ENCODE measurements at regions of chr16 and their contacts with region 1.

Region 1: DNA sequence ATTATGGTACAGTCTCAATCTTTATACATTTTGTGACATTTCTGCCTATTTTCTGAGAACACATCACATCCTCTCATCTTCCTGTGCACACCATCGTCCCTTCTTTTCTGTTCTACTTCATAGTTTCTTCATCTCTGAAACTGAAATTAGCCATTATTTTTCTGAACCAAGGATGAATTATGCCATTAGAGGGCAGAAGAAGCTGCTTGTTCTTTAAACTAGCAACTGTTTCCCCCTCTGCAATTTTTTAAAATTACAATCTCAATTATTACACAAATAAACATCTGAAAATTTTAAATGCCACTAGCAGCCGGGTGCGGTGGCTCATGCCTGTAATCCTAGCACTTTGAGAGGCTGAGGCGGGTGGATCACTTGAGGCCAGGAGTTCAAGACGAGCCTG is 41.3 kb downstream of the RBBP6 start:
- DNase-seq: no peak
- H3K4me3 ChIP-seq: peak overlapping the region in 1 of 59 donors; percentile 3
- H3K27ac ChIP-seq: no peak overlapping the region
- H3K27me3 ChIP-seq: no peaks in the 10 kb centered on the region
- CTCF ChIP-seq: peak in 53 of 56 donors; percentile 15 to 65 (median 40)

Region 2: DNA sequence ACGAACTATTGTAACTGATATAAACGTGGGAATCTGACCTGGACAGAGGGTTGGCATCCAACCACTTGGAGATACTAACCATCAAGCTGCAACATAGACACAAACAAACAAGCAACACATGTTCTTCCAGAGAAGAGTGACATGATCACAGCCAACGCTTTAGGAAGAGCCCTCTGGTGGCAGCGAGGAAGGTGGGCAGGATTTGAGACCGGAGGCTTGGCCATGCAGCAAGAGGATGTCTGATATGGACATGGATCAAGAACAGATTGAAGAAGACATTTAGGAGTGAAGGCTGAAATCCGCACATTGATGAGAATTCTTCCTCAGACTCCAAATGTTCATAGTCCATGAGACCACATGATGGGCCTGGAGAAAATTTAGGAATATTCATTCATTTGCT is 108.5 kb after region 1 on chr16:
- intact Hi-C with region 1: loop called in 1 of 2 experiments (anchors 10 kb)
- DNase-seq: peak in 2 of 10 donors; percentile 22 to 68
- H3K4me3 ChIP-seq: no peak overlapping the region
- H3K27ac ChIP-seq: peak overlapping the region in 7 of 59 donors; percentile 0 to 59 (median 12)
- H3K27me3 ChIP-seq: no peaks in the 10 kb centered on the region
- CTCF ChIP-seq: peak in 53 of 56 donors; percentile 21 to 69 (median 53)

Region 3: GRCh38 chr16:24717411-24717810 is 136.7 kb after region 1 on chr16:
- intact Hi-C with region 1: no loop called
- DNase-seq: no peak
- H3K4me3 ChIP-seq: no peak overlapping the region
- H3K27ac ChIP-seq: no peak overlapping the region
- H3K27me3 ChIP-seq: no peaks in the 10 kb centered on the region
- CTCF ChIP-seq: no peak

Region 4: DNA sequence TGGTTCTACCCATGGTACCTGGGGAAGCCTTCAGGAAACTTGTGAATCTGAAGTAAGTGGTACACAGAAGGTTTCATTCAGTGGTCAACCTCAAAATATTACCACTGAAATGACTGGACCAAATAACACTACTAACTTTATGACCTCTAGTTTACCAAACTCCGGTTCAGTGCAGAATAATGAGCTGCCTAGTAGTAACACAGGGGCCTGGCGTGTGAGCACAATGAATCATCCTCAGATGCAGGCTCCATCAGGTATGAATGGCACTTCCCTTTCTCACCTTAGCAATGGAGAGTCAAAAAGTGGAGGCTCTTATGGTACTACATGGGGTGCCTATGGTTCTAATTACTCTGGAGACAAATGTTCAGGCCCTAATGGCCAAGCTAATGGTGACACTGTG is 209.2 kb after region 1 on chr16:
- intact Hi-C with region 1: loop called in 1 of 2 experiments (anchors 10 kb)
- DNase-seq: no peak
- H3K4me3 ChIP-seq: no peak overlapping the region
- H3K27ac ChIP-seq: no peak overlapping the region
- H3K27me3 ChIP-seq: no peaks in the 10 kb centered on the region
- CTCF ChIP-seq: no peak

Measured in dorsolateral prefrontal cortex (tissue), 120 donors.